MCF 10A (cell line): ENCODE measurements at regions of chr14 and their contacts with region 1.

Region 1: GRCh38 chr14:45134051-45134958 is at the start of gene FKBP3:
- DNase-seq: peak; percentile 99
- H3K4me3 Mint-ChIP-seq: peak within 1 kb of the TSS; percentile 100
- H3K27ac Mint-ChIP-seq: peak within 1 kb of the TSS; percentile 99
- H3K4me1 Mint-ChIP-seq: peaks cover 17% of the 10 kb centered on the region
- H3K27me3 Mint-ChIP-seq: no peaks in the 10 kb centered on the region
- CTCF ChIP-seq: no peak
- total RNA-seq, gene FKBP3: 61.7 and 62.0 TPM in 2 replicates

Region 2: DNA sequence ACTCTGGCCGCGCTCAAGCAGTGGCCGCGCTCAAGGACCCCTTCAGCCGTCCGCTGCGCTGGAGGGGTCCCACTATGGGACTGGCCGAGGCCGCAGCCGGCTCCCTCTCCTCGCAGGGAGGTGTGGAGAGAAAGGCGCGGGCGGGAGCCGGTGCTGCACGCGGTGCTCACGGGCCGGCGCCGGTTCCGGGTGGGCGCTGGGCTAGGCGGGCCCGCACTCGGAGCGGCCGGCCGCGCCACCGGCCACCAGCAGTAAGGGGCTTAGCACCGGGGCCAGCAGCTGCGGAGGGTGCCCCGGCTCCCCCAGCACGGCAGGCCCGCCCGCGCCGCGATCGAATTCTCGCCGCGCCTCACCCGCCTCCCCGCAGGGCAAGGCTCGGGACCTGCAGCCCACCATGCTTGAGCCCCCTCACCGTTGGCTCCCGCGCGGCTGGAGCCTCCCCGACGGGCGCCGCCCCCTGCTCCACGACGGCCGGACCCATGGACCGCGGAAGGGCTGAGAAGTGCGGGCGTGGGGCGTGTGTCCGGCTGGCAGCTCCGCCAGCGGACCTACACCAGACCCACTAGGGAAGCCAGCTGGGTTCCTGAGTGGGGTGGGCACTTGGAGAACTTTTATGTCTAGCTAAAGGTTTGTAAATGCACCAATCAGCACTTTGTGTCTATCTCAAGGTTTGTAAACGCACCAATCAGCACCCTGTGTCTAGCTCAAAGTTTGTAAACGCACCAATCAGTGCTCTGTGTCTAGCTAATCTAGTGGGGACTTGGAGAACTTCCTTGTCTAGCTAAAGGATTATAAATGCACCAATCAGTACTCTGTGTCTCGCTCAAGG is 222.1 kb before region 1 on chr14:
- CTCF ChIA-PET with region 1: interaction called, 12 read pairs
- POLR2A ChIA-PET with region 1: interaction called, 19 read pairs
- intact Hi-C with region 1: loop called (anchors 1 kb)
- DNase-seq: no peak
- H3K4me3 Mint-ChIP-seq: no peak overlapping the region
- H3K27ac Mint-ChIP-seq: no peak overlapping the region
- H3K4me1 Mint-ChIP-seq: no peaks in the 10 kb centered on the region
- H3K27me3 Mint-ChIP-seq: no peaks in the 10 kb centered on the region
- CTCF ChIP-seq: no peak

Region 3: GRCh38 chr14:44961604-44962333 is 172.5 kb before region 1 on chr14 and contains the starts of genes KLHL28 and TOGARAM1:
- CTCF ChIA-PET with region 1: interaction called, 3 read pairs
- POLR2A ChIA-PET with region 1: interaction called, 105 read pairs
- intact Hi-C with region 1: loop called (anchors 1 kb)
- DNase-seq: peak; percentile 100
- H3K4me3 Mint-ChIP-seq: no peak within 1 kb of the TSS
- H3K27ac Mint-ChIP-seq: no peak within 1 kb of the TSS
- H3K4me1 Mint-ChIP-seq: peaks cover 24% of the 10 kb centered on the region
- H3K27me3 Mint-ChIP-seq: no peaks in the 10 kb centered on the region
- CTCF ChIP-seq: no peak
- total RNA-seq, gene KLHL28: 11.2 and 13.8 TPM in 2 replicates
- total RNA-seq, gene TOGARAM1: 12.0 and 15.8 TPM in 2 replicates

Region 4: DNA sequence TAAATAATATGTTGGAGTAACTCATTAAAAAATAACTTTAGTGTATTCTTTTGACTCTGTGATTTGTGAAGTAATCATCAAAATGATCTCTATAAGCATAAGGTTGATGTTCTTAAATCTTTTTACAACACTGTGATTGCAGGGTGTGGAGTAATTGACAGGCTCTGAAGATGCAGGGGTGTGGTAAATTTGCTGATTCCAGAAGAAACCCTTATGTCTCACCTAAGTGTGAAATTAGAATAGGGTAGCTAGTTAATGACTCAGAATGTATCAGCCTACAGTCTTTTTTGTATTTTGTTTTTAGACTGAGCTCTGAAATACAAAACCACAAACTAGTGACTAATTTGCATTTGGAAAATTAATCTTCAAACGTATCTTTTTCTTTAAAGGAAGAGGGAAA is 44.5 kb before region 1 on chr14:
- CTCF ChIA-PET with region 1: interaction called, 3 read pairs
- POLR2A ChIA-PET with region 1: interaction called, 69 read pairs
- intact Hi-C with region 1: loop called (anchors 2 kb)
- DNase-seq: peak; percentile 64
- H3K4me3 Mint-ChIP-seq: peak overlapping the region; percentile 7
- H3K27ac Mint-ChIP-seq: peak overlapping the region; percentile 28
- H3K4me1 Mint-ChIP-seq: peaks cover 51% of the 10 kb centered on the region
- H3K27me3 Mint-ChIP-seq: no peaks in the 10 kb centered on the region
- CTCF ChIP-seq: no peak

Region 5: DNA sequence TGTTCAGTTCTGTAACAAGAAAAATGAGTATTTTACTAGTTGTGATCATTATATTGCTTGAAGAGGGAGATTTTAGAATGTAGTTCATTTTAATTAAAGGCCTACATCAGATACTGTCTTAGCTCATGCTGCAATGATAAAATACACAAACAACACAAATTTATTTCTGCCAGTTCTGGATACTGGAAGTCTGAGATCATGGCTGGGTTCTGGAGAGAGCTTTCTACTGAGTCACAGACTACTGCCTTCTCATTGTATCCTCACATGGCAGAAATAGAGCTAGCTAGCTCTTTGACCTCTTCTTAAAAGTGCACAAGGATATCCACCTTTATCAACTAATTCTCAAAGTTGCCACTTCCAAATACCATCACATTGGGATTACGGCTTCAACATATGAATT is 64.9 kb after region 1 on chr14:
- CTCF ChIA-PET with region 1: interaction called, 3 read pairs
- POLR2A ChIA-PET with region 1: interaction called, 9 read pairs
- intact Hi-C with region 1: loop called (anchors 5 kb)
- DNase-seq: peak; percentile 17
- H3K4me3 Mint-ChIP-seq: no peak overlapping the region
- H3K27ac Mint-ChIP-seq: peak overlapping the region; percentile 47
- H3K4me1 Mint-ChIP-seq: peaks cover 21% of the 10 kb centered on the region
- H3K27me3 Mint-ChIP-seq: no peaks in the 10 kb centered on the region
- CTCF ChIP-seq: no peak

Region 6: GRCh38 chr14:45267071-45267470 is 132.8 kb after region 1 on chr14:
- CTCF ChIA-PET with region 1: interaction called, 14 read pairs
- POLR2A ChIA-PET with region 1: interaction called, 5 read pairs
- intact Hi-C with region 1: loop called (anchors 1 kb)
- DNase-seq: no peak
- H3K4me3 Mint-ChIP-seq: no peak overlapping the region
- H3K27ac Mint-ChIP-seq: peak overlapping the region; percentile 10
- H3K4me1 Mint-ChIP-seq: no peaks in the 10 kb centered on the region
- H3K27me3 Mint-ChIP-seq: no peaks in the 10 kb centered on the region
- CTCF ChIP-seq: no peak